IMR-90 (cell line): ENCODE measurements at regions of chr1 and their contacts with region 1.

Region 1: GRCh38 chr1:189530162-189530561 is 947.5 kb downstream of the BRINP3 start:
- DNase-seq: no peak
- ATAC-seq: no peak
- H3K4me3 ChIP-seq: no peak overlapping the region
- H3K27ac ChIP-seq: no peak overlapping the region
- H3K4me1 ChIP-seq: no peaks in the 10 kb centered on the region
- H3K27me3 ChIP-seq: no peaks in the 10 kb centered on the region
- CTCF ChIP-seq: no peak
- POLR2A ChIP-seq: no peak
- RAD21 ChIP-seq: no peak

Region 2: GRCh38 chr1:189550498-189550897 is 20.3 kb after region 1 on chr1:
- CTCF ChIA-PET with region 1: no interaction called
- POLR2A ChIA-PET with region 1: interaction called, 11 read pairs
- dilution Hi-C with region 1: no loop called
- in situ Hi-C with region 1: no loop called
- intact Hi-C with region 1: no loop called
- DNase-seq: no peak
- ATAC-seq: peak; percentile 54
- H3K4me3 ChIP-seq: no peak overlapping the region
- H3K27ac ChIP-seq: no peak overlapping the region
- H3K4me1 ChIP-seq: no peaks in the 10 kb centered on the region
- H3K27me3 ChIP-seq: no peaks in the 10 kb centered on the region
- CTCF ChIP-seq: no peak
- POLR2A ChIP-seq: no peak
- RAD21 ChIP-seq: no peak

Region 3: DNA sequence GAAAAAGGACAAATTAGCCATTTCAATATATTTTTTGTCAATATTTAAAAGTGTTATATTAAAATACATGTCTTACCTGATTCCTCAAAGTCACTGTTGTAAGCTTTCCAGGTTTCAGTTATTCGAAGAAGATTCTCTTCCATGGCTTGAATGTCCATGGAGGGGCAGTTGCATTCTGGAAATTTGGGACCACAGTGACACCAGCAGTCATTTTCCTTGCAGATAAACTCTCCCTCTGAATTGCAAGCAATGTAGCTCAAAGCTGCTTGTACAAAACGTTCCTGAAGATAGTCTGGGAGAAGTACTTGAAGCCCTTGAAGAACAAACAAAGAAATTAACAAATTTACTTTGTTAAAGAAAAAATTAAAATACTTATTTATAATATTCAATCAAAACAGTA is 695.8 kb after region 1 on chr1:
- CTCF ChIA-PET with region 1: no interaction called
- POLR2A ChIA-PET with region 1: no interaction called
- dilution Hi-C with region 1: no loop called
- in situ Hi-C with region 1: no loop called
- intact Hi-C with region 1: no loop called
- DNase-seq: no peak
- ATAC-seq: no peak
- H3K4me3 ChIP-seq: no peak overlapping the region
- H3K27ac ChIP-seq: no peak overlapping the region
- H3K4me1 ChIP-seq: no peaks in the 10 kb centered on the region
- H3K27me3 ChIP-seq: no peaks in the 10 kb centered on the region
- CTCF ChIP-seq: no peak
- POLR2A ChIP-seq: no peak
- RAD21 ChIP-seq: no peak

Region 4: GRCh38 chr1:191101960-191102359 is 1571.8 kb after region 1 on chr1:
- CTCF ChIA-PET with region 1: no interaction called
- POLR2A ChIA-PET with region 1: no interaction called
- dilution Hi-C with region 1: no loop called
- in situ Hi-C with region 1: no loop called
- intact Hi-C with region 1: no loop called
- DNase-seq: no peak
- ATAC-seq: no peak
- H3K4me3 ChIP-seq: no peak overlapping the region
- H3K27ac ChIP-seq: no peak overlapping the region
- H3K4me1 ChIP-seq: no peaks in the 10 kb centered on the region
- H3K27me3 ChIP-seq: no peaks in the 10 kb centered on the region
- CTCF ChIP-seq: no peak
- POLR2A ChIP-seq: no peak
- RAD21 ChIP-seq: no peak